Activated naive CD4-positive, alpha-beta T cell treated with anti-CD3 and anti-CD28 coated beads, Interleukin-2, amount 10 ng/mL, durations not matched to agents 7 days and 5 days (primary cell): ENCODE measurements at regions of chr5 and their contacts with region 1.

Region 1: DNA sequence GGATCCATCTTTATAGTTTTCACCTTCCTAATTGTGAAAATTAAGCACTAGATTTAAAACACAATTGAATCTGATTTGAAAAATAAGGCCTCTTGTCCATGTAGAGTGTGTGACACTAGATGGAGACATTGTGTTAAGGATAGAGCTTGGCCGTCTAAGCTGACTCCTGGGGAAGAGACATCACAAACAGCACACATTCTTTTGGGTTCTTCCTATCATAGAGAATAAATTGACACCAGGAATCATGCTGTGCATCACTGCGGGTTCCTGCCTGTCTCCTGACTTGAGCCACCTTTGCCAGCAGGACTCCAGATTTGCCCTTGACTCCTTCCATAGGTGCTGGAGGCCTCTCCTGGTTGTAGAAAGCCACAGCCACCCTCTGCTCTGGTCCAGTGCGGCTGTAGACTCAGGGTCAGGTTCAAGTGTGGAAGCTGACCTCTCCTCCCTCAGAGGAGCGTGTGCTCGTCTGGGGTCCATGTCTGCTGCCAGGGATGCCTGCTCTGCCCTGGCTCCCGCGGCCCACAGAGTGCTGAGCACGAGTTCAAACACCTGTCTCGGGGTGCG is 11.2 kb downstream of the ROPN1L start:
- DNase-seq: peak; percentile 32
- H3K4me3 Mint-ChIP-seq: no peak overlapping the region
- H3K27ac Mint-ChIP-seq: no peak overlapping the region
- H3K4me1 Mint-ChIP-seq: peaks cover 24% of the 10 kb centered on the region
- H3K27me3 Mint-ChIP-seq: peaks cover 12% of the 10 kb centered on the region

Region 2: GRCh38 chr5:10637944-10638343 is 185.1 kb after region 1 on chr5:
- CTCF ChIA-PET with region 1: no interaction called
- DNase-seq: no peak
- H3K4me3 Mint-ChIP-seq: no peak overlapping the region
- H3K27ac Mint-ChIP-seq: no peak overlapping the region
- H3K4me1 Mint-ChIP-seq: peaks cover 36% of the 10 kb centered on the region
- H3K27me3 Mint-ChIP-seq: peaks cover 3% of the 10 kb centered on the region

Region 3: DNA sequence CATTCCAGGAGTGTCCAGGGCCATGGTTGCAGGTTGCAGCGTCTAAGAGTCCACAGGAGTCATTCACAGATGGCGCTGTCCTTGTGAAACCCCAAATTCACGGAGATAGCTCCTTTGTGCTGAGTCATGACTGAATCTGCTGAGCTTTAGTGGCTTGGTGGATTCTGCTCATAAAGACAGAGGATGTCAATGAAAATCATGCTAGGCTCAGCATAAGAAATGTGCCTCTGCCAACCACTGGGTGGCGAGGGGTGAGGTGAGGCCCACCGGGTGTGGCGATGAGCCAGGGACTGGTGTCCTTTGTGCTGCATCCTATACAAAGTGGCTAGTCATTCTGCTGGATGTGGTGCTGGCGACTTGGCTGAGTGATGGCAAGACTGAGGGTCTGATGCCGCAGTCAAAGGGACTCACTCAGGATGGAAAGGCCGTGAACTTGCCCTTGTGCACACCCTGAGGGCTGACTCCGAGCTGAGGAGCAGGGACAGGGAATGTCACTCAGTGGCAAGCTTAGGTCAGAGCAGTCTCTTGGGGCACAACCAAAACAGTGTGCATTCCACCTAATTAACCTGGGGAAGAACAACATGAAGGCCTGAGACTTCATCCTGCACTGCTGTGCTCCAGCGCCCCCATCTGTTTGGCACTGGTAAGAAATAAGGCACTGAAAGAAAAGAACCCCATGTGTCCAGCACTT is 236.7 kb after region 1 on chr5:
- CTCF ChIA-PET with region 1: interaction called, 47 read pairs
- DNase-seq: peak; percentile 38
- H3K4me3 Mint-ChIP-seq: no peak overlapping the region
- H3K27ac Mint-ChIP-seq: no peak overlapping the region
- H3K4me1 Mint-ChIP-seq: no peaks in the 10 kb centered on the region
- H3K27me3 Mint-ChIP-seq: no peaks in the 10 kb centered on the region

Region 4: DNA sequence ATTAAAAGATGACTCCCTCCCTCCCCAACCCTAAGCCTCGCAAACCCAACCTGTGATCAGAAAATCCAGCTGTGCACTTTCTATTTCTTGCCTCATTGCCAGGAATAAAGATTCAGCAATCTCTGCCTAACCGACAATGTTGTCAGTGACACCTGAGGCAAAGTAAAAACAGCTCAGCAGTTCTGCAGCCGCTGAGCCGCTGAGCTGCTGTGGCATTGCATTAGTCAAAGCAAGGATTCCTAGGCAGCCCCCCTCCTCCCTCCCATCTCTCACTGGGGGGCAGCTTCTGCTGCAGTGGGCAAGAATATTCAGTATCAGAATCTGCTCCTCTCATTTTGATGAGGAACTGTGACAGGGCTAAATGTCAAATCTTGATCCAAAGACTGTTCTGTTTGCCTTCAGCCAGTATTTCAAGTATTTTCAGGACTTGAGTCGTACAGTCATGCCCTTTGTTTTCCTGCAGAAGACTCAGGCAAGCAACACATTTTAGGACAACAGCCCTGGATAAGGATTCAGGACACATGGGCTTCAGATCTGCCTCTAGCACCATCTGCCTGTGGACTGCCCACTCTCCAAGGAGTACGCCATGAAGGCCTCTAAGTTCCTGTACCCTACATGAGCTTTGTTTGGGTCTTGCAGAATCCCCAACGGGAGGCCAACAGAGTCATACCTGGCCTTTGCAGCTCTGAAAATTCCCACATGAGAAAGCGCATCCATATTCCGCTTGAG is 349.2 kb after region 1 on chr5:
- CTCF ChIA-PET with region 1: no interaction called
- DNase-seq: no peak
- H3K4me3 Mint-ChIP-seq: no peak overlapping the region
- H3K27ac Mint-ChIP-seq: no peak overlapping the region
- H3K4me1 Mint-ChIP-seq: no peaks in the 10 kb centered on the region
- H3K27me3 Mint-ChIP-seq: peaks cover 17% of the 10 kb centered on the region